ENCODE measurements at regions of chr6 and their contacts with region 1.

Region 1: GRCh38 chr6:47631269-47631772 is 67.1 kb upstream of the ADGRF4 start:
- DNase-seq: peak; percentile 55
- ATAC-seq: peak; percentile 77
- H3K4me3 ChIP-seq: no peak overlapping the region
- H3K27ac ChIP-seq: no peak overlapping the region
- H3K4me1 ChIP-seq: no peaks in the 10 kb centered on the region
- H3K27me3 ChIP-seq: no peaks in the 10 kb centered on the region
- CTCF ChIP-seq: peak; percentile 34 to 74 (median 66); a peak in 5 of 6 replicates
- POLR2A ChIP-seq: no peak
- RAD21 ChIP-seq: peak; percentile 86

Region 2: GRCh38 chr6:47413752-47414422 is 217.4 kb before region 1 on chr6:
- CTCF ChIA-PET with region 1: interaction called, 4 read pairs
- POLR2A ChIA-PET with region 1: no interaction called
- RAD21 ChIA-PET with region 1: no interaction called
- intact Hi-C with region 1: loop called (anchors 5 kb)
- DNase-seq: peak; percentile 41
- ATAC-seq: peak; percentile 91
- H3K4me3 ChIP-seq: peak overlapping the region; percentile 38 to 51
- H3K27ac ChIP-seq: no peak overlapping the region
- H3K4me1 ChIP-seq: peaks cover 8 to 16% of the 10 kb centered on the region in 2 experiments; a peak in 3 of 4 replicates
- H3K27me3 ChIP-seq: no peaks in the 10 kb centered on the region
- CTCF ChIP-seq: peak; percentile 63 to 95 (median 89); a peak in 5 of 6 replicates
- POLR2A ChIP-seq: no peak
- RAD21 ChIP-seq: peak; percentile 91

Region 3: DNA sequence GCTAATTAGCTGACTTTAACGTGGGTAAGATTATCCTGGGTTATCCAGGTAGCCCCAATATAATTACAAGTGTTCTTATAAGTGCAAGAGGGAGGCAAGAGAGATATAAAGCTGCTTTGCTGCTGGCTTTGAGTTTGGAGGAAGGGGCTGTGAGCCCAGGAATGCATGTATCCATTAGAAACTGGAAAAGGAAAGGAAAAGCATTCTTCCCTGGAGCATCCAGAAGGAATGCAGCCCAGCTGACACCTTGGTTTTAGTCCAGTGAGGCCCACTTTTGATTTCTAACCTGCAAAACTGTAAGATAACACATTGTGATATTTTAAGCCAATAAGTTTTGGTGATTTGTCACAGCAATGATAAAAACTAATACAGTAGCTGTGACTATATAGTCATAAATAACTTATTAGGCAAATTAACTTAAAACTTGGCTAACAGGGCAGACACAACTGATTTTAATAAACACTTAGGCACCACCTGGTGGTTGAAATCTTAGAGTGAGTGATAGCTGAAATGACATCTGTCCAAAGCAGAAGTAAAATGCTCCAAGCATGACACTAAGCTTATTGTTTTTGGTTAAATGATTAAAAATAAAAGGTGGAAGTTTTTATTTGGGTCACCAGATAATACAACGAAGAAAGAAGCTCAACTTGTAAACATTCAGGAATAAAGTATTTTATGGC is 102.7 kb after region 1 on chr6:
- CTCF ChIA-PET with region 1: interaction called, 70 read pairs
- POLR2A ChIA-PET with region 1: interaction called, 4 read pairs
- RAD21 ChIA-PET with region 1: interaction called, 7 to 9 read pairs
- intact Hi-C with region 1: loop called (anchors 1 kb)
- DNase-seq: peak; percentile 26
- ATAC-seq: peak; percentile 69; the same call in 1 of the 2 replicates
- H3K4me3 ChIP-seq: no peak overlapping the region
- H3K27ac ChIP-seq: no peak overlapping the region
- H3K4me1 ChIP-seq: peaks cover 0 to 6% of the 10 kb centered on the region in 2 experiments; a peak in 1 of 4 replicates
- H3K27me3 ChIP-seq: no peaks in the 10 kb centered on the region
- CTCF ChIP-seq: peak; percentile 31 to 68 (median 58); a peak in 4 of 6 replicates
- POLR2A ChIP-seq: no peak
- RAD21 ChIP-seq: peak; percentile 76

Region 4: DNA sequence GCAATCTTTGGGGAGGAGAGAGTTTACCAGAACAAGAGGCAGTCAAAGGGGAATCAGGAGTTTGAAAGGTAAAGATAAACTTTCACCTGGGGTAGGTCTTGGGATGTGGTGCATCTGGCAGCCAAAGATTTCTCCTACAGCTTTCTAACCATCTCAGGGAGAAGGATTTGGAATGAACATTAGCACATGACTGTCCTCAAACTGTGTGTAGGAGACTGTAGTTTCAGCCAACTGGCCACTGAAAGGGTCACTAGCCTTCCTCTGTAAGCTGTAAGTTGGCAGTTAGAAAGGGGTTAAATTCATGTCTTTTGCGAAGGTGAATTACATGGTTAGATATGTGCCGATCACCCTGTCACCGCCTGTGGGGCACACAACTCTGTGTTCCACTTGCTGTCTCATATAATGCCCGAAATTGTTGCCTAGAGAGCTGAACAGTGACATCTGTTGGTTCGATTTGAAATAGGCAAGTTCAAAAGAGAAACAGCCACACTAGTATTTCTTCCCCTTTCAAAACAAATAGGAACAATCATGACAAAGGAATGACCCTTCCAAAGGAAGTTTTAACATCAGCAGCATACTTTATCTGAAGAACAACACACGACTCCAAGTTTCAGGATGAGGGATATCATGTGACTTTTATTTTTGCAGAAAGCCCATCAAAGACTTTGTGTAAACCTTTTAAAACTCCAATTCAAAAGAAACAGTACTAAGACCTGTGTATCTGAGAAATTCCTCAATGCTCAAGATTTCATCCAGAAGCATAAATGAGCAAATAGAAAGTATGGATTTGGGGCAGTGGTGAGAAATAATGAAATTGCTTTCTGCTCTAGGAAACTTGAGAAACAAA is 149.4 kb after region 1 on chr6:
- CTCF ChIA-PET with region 1: interaction called, 55 read pairs
- POLR2A ChIA-PET with region 1: interaction called, 4 read pairs
- RAD21 ChIA-PET with region 1: interaction called, 8 read pairs
- intact Hi-C with region 1: loop called (anchors 1 kb)
- DNase-seq: peak; percentile 66
- ATAC-seq: peak; percentile 99
- H3K4me3 ChIP-seq: peak overlapping the region in 1 of 2 experiments; percentile 21; a peak in 2 of 4 replicates
- H3K27ac ChIP-seq: no peak overlapping the region
- H3K4me1 ChIP-seq: peaks cover 0 to 13% of the 10 kb centered on the region in 2 experiments; a peak in 1 of 4 replicates
- H3K27me3 ChIP-seq: no peaks in the 10 kb centered on the region
- CTCF ChIP-seq: peak; percentile 63 to 85 (median 84)
- POLR2A ChIP-seq: no peak
- RAD21 ChIP-seq: peak; percentile 84

Region 5: GRCh38 chr6:49423817-49424216 is 1792.5 kb after region 1 on chr6:
- CTCF ChIA-PET with region 1: no interaction called
- POLR2A ChIA-PET with region 1: no interaction called
- RAD21 ChIA-PET with region 1: no interaction called
- intact Hi-C with region 1: loop called (anchors 5 kb)
- DNase-seq: no peak
- ATAC-seq: no peak
- H3K4me3 ChIP-seq: no peak overlapping the region
- H3K27ac ChIP-seq: no peak overlapping the region
- H3K4me1 ChIP-seq: no peaks in the 10 kb centered on the region
- H3K27me3 ChIP-seq: no peaks in the 10 kb centered on the region
- CTCF ChIP-seq: peak; percentile 9 to 49 (median 31); a peak in 3 of 6 replicates
- POLR2A ChIP-seq: no peak
- RAD21 ChIP-seq: peak; percentile 65